PC-9 (cell line): ENCODE measurements at regions of chr5 and their contacts with region 1.

Region 1: GRCh38 chr5:177317959-177318377 is 6.3 kb upstream of the MXD3 start:
- DNase-seq: peak; percentile 67 to 72
- H3K4me3 ChIP-seq: no peak overlapping the region
- H3K27ac ChIP-seq: no peak overlapping the region
- H3K4me1 ChIP-seq: peaks cover 4% of the 10 kb centered on the region; the same call in 1 of the 2 replicates
- H3K27me3 ChIP-seq: no peaks in the 10 kb centered on the region
- CTCF ChIP-seq: peak; percentile 92

Region 2: DNA sequence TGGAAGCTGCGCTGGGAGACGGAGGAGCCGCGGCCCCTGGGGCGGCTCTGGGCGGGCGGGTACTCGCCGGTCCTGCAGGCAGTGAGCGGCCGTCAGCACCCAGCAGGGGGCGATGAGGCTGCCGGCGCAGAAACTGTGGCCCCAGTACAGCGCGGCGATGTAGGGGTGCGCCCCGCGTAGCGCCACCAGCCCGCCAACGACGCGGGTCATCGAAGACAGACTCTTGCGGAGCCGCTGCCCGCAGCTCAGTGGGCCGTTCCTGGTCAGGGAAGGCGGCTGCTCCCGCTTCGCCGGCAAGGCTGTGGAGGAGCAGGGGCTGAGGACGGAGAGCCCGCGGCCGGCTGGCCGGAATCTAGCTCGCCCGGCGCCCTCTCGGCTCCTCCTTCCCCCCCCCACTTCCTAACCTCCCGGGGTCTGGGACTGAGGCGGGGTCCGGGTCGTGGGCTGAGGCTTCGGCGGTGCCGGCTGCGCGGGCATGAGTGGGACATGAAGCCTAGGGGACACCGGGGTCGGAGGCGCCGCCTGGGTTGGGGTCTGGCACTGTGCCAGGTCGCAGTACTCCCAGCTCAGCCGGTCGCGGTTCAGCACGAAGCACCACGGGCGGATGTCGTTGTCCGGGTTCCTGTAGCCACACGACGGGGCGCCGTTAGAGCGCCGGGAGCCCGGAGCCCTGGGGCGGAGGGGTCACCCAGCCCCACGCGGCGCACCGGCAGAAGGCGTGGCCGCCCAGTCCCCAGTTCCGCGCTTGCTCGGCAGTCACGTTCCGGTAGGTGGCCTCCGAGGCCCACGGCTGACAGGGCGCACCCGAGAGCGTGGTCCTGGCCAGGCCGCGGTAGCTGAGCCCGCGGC is 86.0 kb after region 1 on chr5:
- CTCF ChIA-PET with region 1: interaction called, 3 read pairs
- POLR2A ChIA-PET with region 1: interaction called, 4 read pairs
- intact Hi-C with region 1: loop called (anchors 1 kb)
- DNase-seq: peak; percentile 51 to 86
- H3K4me3 ChIP-seq: peak overlapping the region; percentile 78
- H3K27ac ChIP-seq: no peak overlapping the region
- H3K4me1 ChIP-seq: peaks cover 3% of the 10 kb centered on the region; the same call in 1 of the 2 replicates
- H3K27me3 ChIP-seq: no peaks in the 10 kb centered on the region
- CTCF ChIP-seq: peak; percentile 73

Region 3: GRCh38 chr5:177468696-177469628 is 151.0 kb after region 1 on chr5:
- CTCF ChIA-PET with region 1: no interaction called
- POLR2A ChIA-PET with region 1: no interaction called
- intact Hi-C with region 1: no loop called
- DNase-seq: peak; percentile 67 to 73
- H3K4me3 ChIP-seq: no peak overlapping the region
- H3K27ac ChIP-seq: no peak overlapping the region
- H3K4me1 ChIP-seq: peaks cover 22% of the 10 kb centered on the region
- H3K27me3 ChIP-seq: no peaks in the 10 kb centered on the region
- CTCF ChIP-seq: no peak